Mammary epithelial cell (primary cell): ENCODE measurements at regions of chr1 and their contacts with region 1.

Region 1: DNA sequence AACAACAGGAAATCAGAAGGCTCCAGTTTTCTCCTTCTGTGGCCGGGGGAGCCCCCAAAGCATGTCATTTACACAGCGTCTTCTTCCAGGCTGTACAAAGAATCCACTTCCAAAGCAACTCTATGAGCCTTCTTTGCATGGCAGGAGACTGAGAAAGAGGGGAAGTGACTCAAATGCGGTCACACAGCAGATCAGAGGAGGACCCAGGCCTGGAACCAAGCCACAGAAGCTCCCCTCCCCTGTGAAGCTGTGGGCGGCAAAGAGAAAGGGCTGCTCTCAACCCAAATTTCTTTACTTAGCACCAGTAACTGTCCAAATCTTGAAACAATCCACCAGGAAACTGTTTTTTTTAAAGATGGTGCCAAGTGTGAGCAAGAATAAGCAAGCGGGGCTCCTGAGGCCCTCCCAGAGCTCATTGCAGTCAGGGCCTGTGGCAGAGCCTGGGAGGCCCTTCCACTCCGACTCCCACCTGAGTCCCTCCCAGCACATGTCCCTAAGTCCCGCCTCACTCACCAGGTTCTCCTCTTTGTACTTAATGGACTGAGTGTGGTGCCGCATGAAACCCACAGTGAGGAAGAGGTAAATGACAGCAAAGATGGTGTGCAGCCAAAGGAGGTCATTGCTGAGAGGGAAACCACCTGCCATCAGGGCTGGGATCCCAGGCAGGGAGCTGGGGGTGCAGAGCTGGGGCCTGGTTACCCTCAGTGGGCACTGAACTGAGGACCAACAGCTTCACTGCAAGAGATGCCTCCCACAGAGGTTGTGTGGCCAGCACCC is 15.9 kb downstream of the TMEM63A start:
- DNase-seq: no peak
- H3K4me3 ChIP-seq: no peak overlapping the region
- H3K27ac ChIP-seq: no peak overlapping the region
- H3K4me1 ChIP-seq: no peaks in the 10 kb centered on the region
- H3K27me3 ChIP-seq: no peaks in the 10 kb centered on the region
- CTCF ChIP-seq: no peak

Region 2: DNA sequence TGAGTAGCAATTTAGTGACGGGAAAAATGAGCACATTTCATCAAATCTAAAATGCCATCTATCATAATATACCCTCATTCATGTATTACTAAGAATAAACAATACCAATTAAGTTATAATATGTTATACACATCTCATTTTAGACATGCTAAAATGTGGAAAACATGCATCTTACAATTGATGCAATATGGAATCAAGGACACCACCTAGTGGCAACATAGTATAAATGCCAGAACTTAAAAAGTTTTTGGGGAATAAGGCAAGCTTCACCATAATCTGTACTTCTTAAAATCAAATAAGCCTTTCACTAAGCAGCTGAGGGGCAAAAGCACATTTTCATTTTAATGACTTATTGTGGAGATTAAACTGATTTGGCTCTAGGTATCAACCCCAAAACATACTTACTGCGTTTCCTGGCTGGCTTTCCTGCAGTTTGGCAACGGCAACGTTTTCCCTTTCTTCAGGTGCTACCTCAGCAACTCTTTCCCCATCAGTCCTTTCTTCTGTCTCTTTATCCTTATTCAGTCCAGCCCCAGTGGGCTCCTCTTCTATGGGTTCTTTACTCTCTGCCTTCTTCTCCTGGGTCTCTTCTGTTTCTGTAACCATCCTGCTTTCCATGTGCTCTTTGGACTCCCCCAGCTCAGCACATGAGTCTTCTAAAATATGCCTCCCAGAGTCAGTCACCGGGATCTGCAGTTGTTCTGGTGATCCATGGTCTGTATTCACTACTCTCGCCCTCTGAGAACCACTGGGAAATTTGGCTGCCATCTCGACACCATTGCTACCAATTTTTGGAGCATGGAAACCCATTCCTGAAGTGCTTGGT is 121.5 kb after region 1 on chr1:
- CTCF ChIA-PET with region 1: no interaction called
- dilution Hi-C with region 1: loop called (anchors 10 kb)
- in situ Hi-C with region 1: no loop called
- intact Hi-C with region 1: no loop called
- DNase-seq: peak; percentile 30
- H3K4me3 ChIP-seq: no peak overlapping the region
- H3K27ac ChIP-seq: no peak overlapping the region
- H3K4me1 ChIP-seq: no peaks in the 10 kb centered on the region
- H3K27me3 ChIP-seq: no peaks in the 10 kb centered on the region
- CTCF ChIP-seq: peak; percentile 69 to 78